A549 (cell line): ENCODE measurements at regions of chr2 and their contacts with region 1.

Region 1: DNA sequence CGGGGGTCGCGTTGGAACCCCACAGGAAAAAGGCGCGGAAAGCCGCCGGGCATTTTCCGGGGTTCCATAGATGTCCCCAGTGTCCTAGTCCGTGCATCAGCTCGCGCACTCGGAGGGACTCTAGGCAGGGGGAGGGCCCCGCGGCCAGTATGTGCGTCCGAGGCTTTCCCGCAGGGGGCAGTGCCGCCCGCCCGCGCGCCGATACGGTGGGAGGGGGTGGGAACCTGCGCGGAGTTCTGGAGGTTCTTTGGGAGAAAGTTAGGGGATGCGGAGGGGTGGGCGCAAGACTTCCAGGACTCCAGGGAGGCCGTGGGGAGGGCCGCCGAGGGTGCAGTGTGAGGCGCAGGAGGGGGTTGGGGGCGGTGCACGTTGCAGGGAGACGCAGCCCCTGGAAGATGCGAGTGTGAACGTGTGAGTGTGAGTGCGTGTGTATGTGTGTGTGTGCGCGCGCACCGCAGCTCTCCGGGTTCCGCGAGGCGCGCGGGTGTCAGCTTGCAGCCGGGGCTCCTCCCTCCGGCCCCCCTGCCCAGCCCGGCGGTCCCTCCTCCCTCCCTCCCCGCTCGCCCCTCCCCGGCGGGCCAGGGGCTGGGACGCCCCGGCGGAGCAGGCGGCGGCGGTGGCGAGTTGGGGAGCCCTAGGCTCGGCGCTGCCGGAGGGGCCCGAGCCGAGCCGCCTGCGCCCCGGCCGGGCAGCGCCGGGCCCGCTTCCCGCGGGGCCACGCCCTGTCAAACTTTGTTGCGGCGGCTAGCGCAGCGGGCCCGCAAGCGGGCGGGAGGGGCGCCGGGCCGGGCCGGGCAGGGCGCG is at the start of gene TCF7L1:
- DNase-seq: peak; percentile 89 to 93
- ATAC-seq: peak; percentile 87 to 96
- H3K4me3 ChIP-seq: peak within 1 kb of the TSS; percentile 61
- H3K27ac ChIP-seq: peak within 1 kb of the TSS; percentile 76 to 90
- H3K4me1 ChIP-seq: peaks cover 9% of the 10 kb centered on the region
- CTCF ChIP-seq: peak; percentile 78
- EP300 ChIP-seq: no peak
- POLR2A ChIP-seq: peak; percentile 70
- RAD21 ChIP-seq: peak; percentile 72 to 86
- polyA plus RNA-seq, gene TCF7L1: 0.68 and 0.95 TPM in 2 replicates

Region 2: GRCh38 chr2:85111819-85112281 is 21.2 kb before region 1 on chr2:
- CTCF ChIA-PET with region 1: interaction called, 15 read pairs
- POLR2A ChIA-PET with region 1: no interaction called
- DNase-seq: no peak
- ATAC-seq: peak in 1 of 2 experiments; percentile 49; a peak in 2 of 6 replicates
- H3K4me3 ChIP-seq: no peak overlapping the region
- H3K27ac ChIP-seq: no peak overlapping the region
- H3K4me1 ChIP-seq: peaks cover under 1% of the 10 kb centered on the region; the same call in 1 of the 3 replicates
- CTCF ChIP-seq: no peak
- EP300 ChIP-seq: no peak
- POLR2A ChIP-seq: no peak
- RAD21 ChIP-seq: no peak

Region 3: GRCh38 chr2:85143463-85144082 is 10.5 kb after region 1 on chr2:
- CTCF ChIA-PET with region 1: interaction called, 13 read pairs
- POLR2A ChIA-PET with region 1: interaction called, 5 read pairs
- DNase-seq: no peak
- ATAC-seq: no peak
- H3K4me3 ChIP-seq: no peak overlapping the region
- H3K27ac ChIP-seq: no peak overlapping the region
- H3K4me1 ChIP-seq: no peaks in the 10 kb centered on the region
- CTCF ChIP-seq: no peak
- EP300 ChIP-seq: no peak
- POLR2A ChIP-seq: no peak
- RAD21 ChIP-seq: no peak